Heart right ventricle (tissue), 16 donors: ENCODE measurements at regions of chr9 and their contacts with region 1.

Region 1: DNA sequence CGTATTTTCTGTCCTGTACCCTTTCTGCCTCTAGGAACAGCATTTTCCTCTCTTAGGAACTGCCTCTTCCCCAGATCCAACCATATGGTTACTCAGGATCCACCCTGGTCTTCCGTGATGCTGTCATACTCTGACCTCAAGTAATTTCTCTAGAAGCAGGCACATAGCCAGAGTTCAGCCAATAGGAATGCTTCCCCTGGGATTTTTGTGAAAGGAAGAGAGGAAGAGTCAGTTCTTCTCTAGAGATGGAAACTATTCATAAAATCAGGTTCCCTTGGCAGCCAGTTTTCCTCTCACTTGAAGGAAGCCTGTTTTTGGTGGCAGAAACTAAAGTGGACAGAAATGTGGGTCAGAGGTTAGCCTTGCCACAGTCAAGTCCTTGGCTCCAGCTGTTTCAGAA is 400.1 kb upstream of the PCSK5 start:
- DNase-seq: peak in 1 of 2 donors; percentile 56
- ATAC-seq: peak in 7 of 8 donors; percentile 43 to 89 (median 82)
- H3K4me3 ChIP-seq: no peak overlapping the region
- H3K27ac ChIP-seq: peak overlapping the region in 1 of 10 donors; percentile 58
- H3K4me1 ChIP-seq: peaks cover 0 to 31% (median 0%) of the 10 kb centered on the region in 9 donors
- H3K27me3 ChIP-seq: no peaks in the 10 kb centered on the region
- CTCF ChIP-seq: no peak

Region 2: DNA sequence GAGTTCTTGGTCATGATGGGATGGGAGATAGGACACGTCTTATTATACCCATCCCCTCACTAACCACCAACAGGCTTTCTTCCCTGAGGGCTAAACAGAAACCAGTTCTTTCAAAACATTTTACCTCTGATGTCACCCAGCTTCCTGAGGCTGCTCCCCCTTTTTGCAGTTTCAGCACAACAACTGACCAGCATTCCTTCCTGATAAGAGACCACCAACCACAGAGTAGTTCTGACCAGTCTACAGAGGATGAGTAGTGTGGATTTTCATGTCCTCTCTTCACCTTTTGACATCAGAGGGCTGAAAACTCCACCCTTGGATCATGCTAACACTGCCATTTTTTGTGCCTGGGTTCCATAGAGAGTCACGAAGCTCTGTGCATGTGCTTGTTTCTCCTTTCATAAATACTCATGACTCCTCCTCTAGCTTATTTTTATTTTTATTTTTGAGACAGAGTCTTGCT is 319.4 kb before region 1 on chr9:
- intact Hi-C with region 1: no loop called
- DNase-seq: no peak
- ATAC-seq: no peak
- H3K4me3 ChIP-seq: no peak overlapping the region
- H3K27ac ChIP-seq: no peak overlapping the region
- H3K4me1 ChIP-seq: peaks cover 0 to 13% (median 3%) of the 10 kb centered on the region in 9 donors
- H3K27me3 ChIP-seq: no peaks in the 10 kb centered on the region
- CTCF ChIP-seq: no peak

Region 3: GRCh38 chr9:75432386-75432785 is 57.9 kb before region 1 on chr9:
- intact Hi-C with region 1: loop called in 1 of 10 experiments (anchors 1 kb)
- DNase-seq: peak in 1 of 2 donors; percentile 21
- ATAC-seq: peak in 1 of 8 donors; percentile 27
- H3K4me3 ChIP-seq: no peak overlapping the region
- H3K27ac ChIP-seq: peak overlapping the region in 7 of 10 donors; percentile 12 to 66 (median 52)
- H3K4me1 ChIP-seq: peaks cover 0 to 36% (median 13%) of the 10 kb centered on the region in 9 donors
- H3K27me3 ChIP-seq: peaks cover 0 to 5% (median 0%) of the 10 kb centered on the region in 7 donors
- CTCF ChIP-seq: no peak

Region 4: GRCh38 chr9:75552941-75553340 is 62.6 kb after region 1 on chr9:
- intact Hi-C with region 1: no loop called
- DNase-seq: no peak
- ATAC-seq: no peak
- H3K4me3 ChIP-seq: no peak overlapping the region
- H3K27ac ChIP-seq: no peak overlapping the region
- H3K4me1 ChIP-seq: no peaks in the 10 kb centered on the region
- H3K27me3 ChIP-seq: no peaks in the 10 kb centered on the region
- CTCF ChIP-seq: no peak